Adrenal gland (tissue), 19 donors: ENCODE measurements at regions of chr6 and their contacts with region 1.

Region 1: GRCh38 chr6:105733565-105734162 is 330.8 kb upstream of the PREP start:
- DNase-seq: no peak
- H3K4me3 ChIP-seq: no peak overlapping the region
- H3K27ac ChIP-seq: no peak overlapping the region
- H3K4me1 ChIP-seq: no peaks in the 10 kb centered on the region
- H3K27me3 ChIP-seq: no peaks in the 10 kb centered on the region
- CTCF ChIP-seq: peak; percentile 49 to 76 (median 64)
- POLR2A ChIP-seq: no peak

Region 2: DNA sequence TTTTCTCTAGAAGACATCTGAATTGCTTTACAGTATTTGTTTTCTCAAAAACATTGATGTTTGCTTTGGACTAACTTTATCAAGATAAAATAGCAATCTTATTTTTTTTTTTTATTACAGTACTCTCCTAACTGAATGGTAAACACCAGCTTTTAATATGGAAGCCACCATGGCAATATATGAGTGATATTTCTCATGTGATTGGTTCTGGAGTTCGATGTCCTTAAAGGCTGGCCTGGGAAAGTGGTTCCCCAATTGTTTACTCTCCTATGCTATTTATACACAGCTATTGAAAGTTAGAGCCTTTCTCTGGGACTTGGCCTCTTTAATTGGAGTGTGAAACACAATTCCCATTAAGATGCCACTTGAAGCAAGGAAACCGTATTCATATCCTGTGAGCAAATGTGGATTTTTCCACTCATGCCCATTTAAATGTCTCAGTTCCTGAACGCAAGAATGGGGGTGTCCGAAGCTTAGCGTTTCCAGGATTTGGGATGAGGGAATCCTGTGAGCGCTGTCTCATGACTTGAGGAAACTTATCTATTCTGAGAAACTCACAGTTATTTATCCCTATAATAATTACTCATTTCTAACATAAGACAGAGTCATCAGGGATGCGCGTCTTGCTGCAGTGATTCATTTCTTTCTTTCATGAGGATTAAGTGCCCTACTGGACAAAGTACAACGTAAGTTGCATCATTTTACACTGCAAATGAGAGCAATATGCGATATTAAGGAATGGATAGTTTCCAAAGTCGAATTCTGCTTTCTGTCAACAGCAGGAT is 187.5 kb before region 1 on chr6:
- intact Hi-C with region 1: no loop called
- DNase-seq: no peak
- H3K4me3 ChIP-seq: no peak overlapping the region
- H3K27ac ChIP-seq: no peak overlapping the region
- H3K4me1 ChIP-seq: no peaks in the 10 kb centered on the region
- H3K27me3 ChIP-seq: no peaks in the 10 kb centered on the region
- CTCF ChIP-seq: no peak
- POLR2A ChIP-seq: no peak

Region 3: DNA sequence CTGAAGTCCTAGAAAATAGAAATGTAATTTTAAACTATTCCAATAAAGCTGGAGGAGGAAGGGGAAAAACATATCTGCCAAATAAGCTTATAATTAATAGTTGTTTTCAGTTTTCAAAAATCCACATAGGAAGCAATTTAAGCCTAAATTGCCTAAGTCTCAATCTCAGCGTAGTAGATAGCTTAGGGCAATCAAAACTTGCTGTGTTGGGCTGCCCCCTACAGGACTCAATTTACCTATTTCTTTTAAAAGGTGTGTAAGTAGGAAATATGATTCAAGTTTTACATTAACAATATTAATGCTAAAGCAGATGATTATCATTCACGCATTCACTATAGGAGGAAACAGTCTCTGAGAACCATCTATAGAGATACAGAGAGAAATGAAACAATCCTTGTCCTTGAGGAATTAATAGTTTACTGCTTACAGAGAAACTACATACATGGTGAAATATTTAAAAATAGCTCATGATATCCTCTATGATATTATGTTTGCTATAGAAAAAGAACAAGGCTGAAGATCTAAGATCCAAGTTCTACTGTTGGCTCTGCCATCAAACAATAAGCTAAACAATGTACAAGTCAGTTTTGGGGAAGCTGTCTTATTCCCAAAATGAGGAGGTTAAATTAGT is 489.8 kb after region 1 on chr6:
- intact Hi-C with region 1: loop called in 1 of 2 experiments (anchors 10 kb)
- DNase-seq: peak; percentile 39 to 75 (median 55)
- H3K4me3 ChIP-seq: no peak overlapping the region
- H3K27ac ChIP-seq: no peak overlapping the region
- H3K4me1 ChIP-seq: no peaks in the 10 kb centered on the region
- H3K27me3 ChIP-seq: no peaks in the 10 kb centered on the region
- CTCF ChIP-seq: peak; percentile 44 to 70 (median 55)
- POLR2A ChIP-seq: no peak